PC-9 (cell line): ENCODE measurements at regions of chrX and their contacts with region 1.

Region 1: DNA sequence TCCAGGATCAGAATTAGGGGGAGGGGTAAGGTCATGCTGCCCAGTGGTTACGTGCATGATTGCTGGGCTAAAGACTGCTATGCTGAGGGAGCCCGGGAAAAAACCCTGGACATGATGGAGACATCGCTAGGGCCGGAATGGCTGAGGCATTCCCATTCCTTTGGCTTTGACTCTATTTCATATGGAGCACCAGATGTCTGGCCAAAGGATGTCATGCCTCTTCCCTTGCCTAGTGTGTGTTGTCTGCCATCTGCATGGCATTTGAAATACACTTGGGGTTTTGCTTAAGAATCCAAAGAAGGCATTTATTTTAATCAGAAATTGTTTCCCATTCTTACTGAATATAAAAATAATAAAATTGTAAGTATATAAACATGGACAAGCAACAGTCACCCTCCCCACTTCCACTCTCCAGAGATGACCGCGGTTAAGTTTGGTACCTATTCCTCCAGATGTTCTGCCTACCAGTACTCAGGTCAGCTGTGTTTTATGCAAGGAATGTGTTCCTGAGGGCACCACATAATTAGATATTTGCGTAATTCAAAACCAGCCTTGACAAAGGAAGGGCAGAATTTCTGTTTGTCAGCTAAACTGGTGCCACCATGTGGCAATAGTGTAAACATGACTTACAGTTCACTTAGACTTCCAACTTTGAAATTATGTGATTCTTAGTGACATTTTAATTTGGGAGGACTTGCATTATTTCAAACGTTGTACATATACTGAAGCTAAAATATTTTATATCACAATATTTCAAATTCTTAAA is 105.9 kb downstream of the CT47B1 start:
- DNase-seq: peak; percentile 33 to 89
- H3K4me3 ChIP-seq: no peak overlapping the region
- H3K27ac ChIP-seq: peak overlapping the region; percentile 82
- H3K4me1 ChIP-seq: peaks cover 36% of the 10 kb centered on the region
- H3K27me3 ChIP-seq: no peaks in the 10 kb centered on the region
- CTCF ChIP-seq: peak; percentile 62

Region 2: GRCh38 chrX:120499301-120500072 is 270.3 kb before region 1 on chrX:
- CTCF ChIA-PET with region 1: no interaction called
- POLR2A ChIA-PET with region 1: no interaction called
- intact Hi-C with region 1: loop called (anchors 1 kb)
- DNase-seq: no peak
- H3K4me3 ChIP-seq: no peak overlapping the region
- H3K27ac ChIP-seq: no peak overlapping the region
- H3K4me1 ChIP-seq: peaks cover 9% of the 10 kb centered on the region
- H3K27me3 ChIP-seq: no peaks in the 10 kb centered on the region
- CTCF ChIP-seq: no peak

Region 3: DNA sequence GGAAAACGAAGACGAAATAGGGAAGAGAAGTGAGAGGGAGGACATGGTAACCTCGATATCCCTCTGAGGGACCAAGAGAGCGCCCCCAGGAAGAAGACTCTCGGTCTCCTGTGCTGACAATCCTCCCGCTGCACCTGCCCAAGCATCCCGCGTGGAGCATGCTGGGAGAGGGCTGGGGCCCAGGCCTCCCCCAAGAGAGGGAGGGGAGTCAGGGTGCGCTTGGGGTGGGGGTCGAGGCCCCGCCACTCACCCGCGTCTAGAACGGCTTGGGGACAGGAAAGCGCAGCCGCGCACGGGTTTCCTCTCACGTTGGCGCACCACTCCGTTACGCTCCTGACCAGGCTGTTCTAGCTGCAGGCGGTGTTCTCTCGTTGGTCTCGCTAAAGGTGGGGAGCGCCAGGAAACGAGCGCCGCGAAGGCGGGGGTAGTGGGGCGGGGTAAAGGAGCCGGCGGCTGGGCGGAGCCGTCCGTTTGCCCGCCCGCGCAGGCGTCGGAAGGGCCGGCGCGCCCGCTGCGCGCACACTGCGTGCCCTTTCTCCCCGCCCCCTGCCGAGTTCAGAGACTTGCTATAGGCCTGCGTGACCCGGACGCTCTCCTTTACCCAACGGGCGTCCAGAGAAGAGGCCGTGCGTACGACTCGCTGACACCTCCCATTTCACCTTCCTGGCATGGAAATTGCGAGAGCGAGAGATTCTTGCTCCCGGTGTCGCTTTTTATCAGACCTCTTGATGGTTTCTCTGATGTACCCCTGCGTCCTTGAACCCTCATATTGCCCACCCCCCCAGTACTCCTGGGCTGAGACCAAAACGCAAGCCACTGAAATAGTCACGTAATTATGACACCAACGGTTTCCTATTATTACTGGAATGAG is 139.9 kb before region 1 on chrX and contains the start of gene C1GALT1C1:
- CTCF ChIA-PET with region 1: no interaction called
- POLR2A ChIA-PET with region 1: no interaction called
- intact Hi-C with region 1: loop called (anchors 2 kb)
- DNase-seq: peak; percentile 92 to 98
- H3K4me3 ChIP-seq: peak within 1 kb of the TSS; percentile 77
- H3K27ac ChIP-seq: peak within 1 kb of the TSS; percentile 87
- H3K4me1 ChIP-seq: peaks cover 23% of the 10 kb centered on the region
- H3K27me3 ChIP-seq: no peaks in the 10 kb centered on the region
- CTCF ChIP-seq: no peak
- total RNA-seq, gene C1GALT1C1: 32.7 and 38.4 TPM in 2 replicates

Region 4: DNA sequence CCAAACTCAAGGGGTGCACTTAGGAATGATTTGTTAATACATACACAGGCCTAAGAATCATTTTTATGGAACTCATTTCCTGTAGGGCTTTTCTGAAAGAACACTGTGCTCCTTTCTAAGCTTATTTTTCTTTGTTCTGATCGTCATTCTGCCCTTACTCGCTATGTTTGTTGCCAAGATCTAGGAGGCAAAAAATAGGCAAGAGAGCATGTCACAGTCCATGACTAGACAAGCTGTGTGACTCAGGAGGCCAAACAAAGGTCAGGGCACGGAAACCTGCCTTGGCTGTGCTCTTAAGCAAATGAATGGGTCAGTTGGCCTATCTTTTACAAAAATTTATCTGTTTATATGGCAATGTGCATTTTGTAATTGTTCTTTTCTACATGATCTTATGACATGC is 97.4 kb before region 1 on chrX:
- CTCF ChIA-PET with region 1: no interaction called
- POLR2A ChIA-PET with region 1: no interaction called
- intact Hi-C with region 1: loop called (anchors 2 kb)
- DNase-seq: peak; percentile 50 to 89
- H3K4me3 ChIP-seq: no peak overlapping the region
- H3K27ac ChIP-seq: peak overlapping the region; percentile 94
- H3K4me1 ChIP-seq: peaks cover 29% of the 10 kb centered on the region
- H3K27me3 ChIP-seq: no peaks in the 10 kb centered on the region
- CTCF ChIP-seq: no peak

Region 5: GRCh38 chrX:120726294-120726693 is 43.5 kb before region 1 on chrX:
- CTCF ChIA-PET with region 1: no interaction called
- POLR2A ChIA-PET with region 1: no interaction called
- intact Hi-C with region 1: no loop called
- DNase-seq: no peak
- H3K4me3 ChIP-seq: no peak overlapping the region
- H3K27ac ChIP-seq: no peak overlapping the region
- H3K4me1 ChIP-seq: no peaks in the 10 kb centered on the region
- H3K27me3 ChIP-seq: no peaks in the 10 kb centered on the region
- CTCF ChIP-seq: no peak

Region 6: DNA sequence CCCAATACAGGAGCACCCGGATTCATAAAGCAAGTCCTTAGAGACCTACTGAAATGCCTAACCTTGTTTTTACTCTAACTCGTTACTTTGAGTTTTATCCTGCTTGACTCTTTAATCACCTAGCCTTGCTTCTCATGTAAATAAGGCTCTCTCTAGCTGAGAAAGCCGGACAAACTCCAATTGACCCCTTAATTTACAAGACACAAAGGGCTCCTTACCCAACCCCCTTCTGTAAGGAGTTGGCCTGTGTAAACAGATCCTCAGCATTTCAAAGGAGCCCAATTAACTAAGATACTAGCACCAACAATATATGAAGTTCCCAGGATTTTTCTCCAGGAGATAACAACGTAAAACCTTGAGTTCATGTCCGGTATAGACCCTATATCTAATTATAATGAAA is 44.2 kb after region 1 on chrX:
- CTCF ChIA-PET with region 1: no interaction called
- POLR2A ChIA-PET with region 1: no interaction called
- intact Hi-C with region 1: no loop called
- DNase-seq: no peak
- H3K4me3 ChIP-seq: no peak overlapping the region
- H3K27ac ChIP-seq: no peak overlapping the region
- H3K4me1 ChIP-seq: no peaks in the 10 kb centered on the region
- H3K27me3 ChIP-seq: no peaks in the 10 kb centered on the region
- CTCF ChIP-seq: no peak